ENCODE measurements at regions of chr3 and their contacts with region 1.

Region 1: GRCh38 chr3:67113802-67114407 is 115.8 kb downstream of the KBTBD8 start:
- DNase-seq: peak; percentile 63 to 76 (median 68)
- H3K4me3 ChIP-seq: no peak overlapping the region
- H3K4me3 Mint-ChIP-seq: no peak overlapping the region
- H3K27ac ChIP-seq: no peak overlapping the region
- H3K27ac Mint-ChIP-seq: no peak overlapping the region
- H3K4me1 ChIP-seq: no peaks in the 10 kb centered on the region
- H3K4me1 Mint-ChIP-seq: no peaks in the 10 kb centered on the region
- H3K27me3 ChIP-seq: no peaks in the 10 kb centered on the region
- H3K27me3 Mint-ChIP-seq: peaks cover 7 to 17% of the 10 kb centered on the region in 2 donors

Region 2: GRCh38 chr3:66998113-66998903 is 115.6 kb before region 1 on chr3 and contains the start of gene KBTBD8:
- CTCF ChIA-PET with region 1: interaction called, 14 read pairs
- POLR2A ChIA-PET with region 1: no interaction called
- intact Hi-C with region 1: no loop called
- DNase-seq: peak; percentile 98 to 99 (median 98)
- H3K4me3 ChIP-seq: peak within 1 kb of the TSS; percentile 57 to 85
- H3K4me3 Mint-ChIP-seq: peak within 1 kb of the TSS; percentile 90 to 96 (median 94)
- H3K27ac ChIP-seq: peak within 1 kb of the TSS; percentile 67
- H3K27ac Mint-ChIP-seq: peak within 1 kb of the TSS; percentile 88 to 97 (median 95)
- H3K4me1 ChIP-seq: peaks cover 39% of the 10 kb centered on the region
- H3K4me1 Mint-ChIP-seq: peaks cover 23 to 48% (median 30%) of the 10 kb centered on the region in 4 donors
- H3K27me3 ChIP-seq: peaks cover 3% of the 10 kb centered on the region
- H3K27me3 Mint-ChIP-seq: peaks cover 0 to 4% of the 10 kb centered on the region in 2 donors
- total RNA-seq, gene KBTBD8: 8.3 to 10.8 TPM

Region 3: DNA sequence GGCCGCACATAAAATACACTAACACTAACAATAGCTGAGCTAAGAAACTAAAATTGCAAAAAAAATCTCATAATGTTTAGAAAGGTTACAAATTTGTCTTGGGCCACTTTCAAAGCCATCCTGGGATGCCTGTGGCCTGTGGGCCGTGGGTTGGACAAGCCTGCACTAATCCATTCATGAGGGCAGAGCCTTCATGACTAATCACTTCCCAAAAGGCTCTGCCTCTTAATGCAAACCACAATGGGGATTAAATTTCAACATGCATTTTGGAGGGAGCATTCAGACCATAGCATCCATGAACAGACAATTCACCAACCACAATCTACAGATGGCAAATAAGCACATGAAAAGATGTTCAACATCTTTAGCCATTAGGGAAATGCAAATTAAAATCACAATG is 412.3 kb after region 1 on chr3:
- CTCF ChIA-PET with region 1: no interaction called
- POLR2A ChIA-PET with region 1: no interaction called
- intact Hi-C with region 1: no loop called
- DNase-seq: no peak
- H3K4me3 ChIP-seq: no peak overlapping the region
- H3K4me3 Mint-ChIP-seq: no peak overlapping the region
- H3K27ac ChIP-seq: no peak overlapping the region
- H3K27ac Mint-ChIP-seq: no peak overlapping the region
- H3K4me1 ChIP-seq: no peaks in the 10 kb centered on the region
- H3K4me1 Mint-ChIP-seq: peaks cover 1 to 22% (median 10%) of the 10 kb centered on the region in 4 donors
- H3K27me3 ChIP-seq: no peaks in the 10 kb centered on the region
- H3K27me3 Mint-ChIP-seq: no peaks in the 10 kb centered on the region

Region 4: DNA sequence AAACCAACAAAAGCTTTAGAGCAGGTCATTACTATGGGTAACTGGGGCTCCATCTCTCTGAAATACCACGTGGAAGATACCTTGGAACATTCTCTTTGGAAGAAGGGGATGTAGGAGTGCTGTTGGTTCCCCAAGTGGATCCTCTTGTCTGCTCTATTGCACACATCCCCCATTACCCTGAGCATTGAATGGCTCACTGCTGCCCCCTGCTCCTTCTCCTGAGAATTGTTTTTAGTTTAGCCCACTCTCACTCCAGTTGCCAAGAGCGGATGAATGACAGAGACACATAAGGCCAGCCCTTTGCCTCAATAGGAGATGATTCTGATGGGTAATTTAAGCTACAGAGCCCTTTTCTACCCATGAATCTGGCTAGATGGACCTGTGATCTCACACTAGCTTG is 676.1 kb after region 1 on chr3:
- CTCF ChIA-PET with region 1: interaction called, 51 read pairs
- POLR2A ChIA-PET with region 1: no interaction called
- intact Hi-C with region 1: loop called (anchors 1 kb)
- DNase-seq: peak; percentile 55 to 68 (median 58)
- H3K4me3 ChIP-seq: no peak overlapping the region
- H3K4me3 Mint-ChIP-seq: no peak overlapping the region
- H3K27ac ChIP-seq: no peak overlapping the region
- H3K27ac Mint-ChIP-seq: no peak overlapping the region
- H3K4me1 ChIP-seq: no peaks in the 10 kb centered on the region
- H3K4me1 Mint-ChIP-seq: peaks cover 4 to 10% (median 5%) of the 10 kb centered on the region in 4 donors
- H3K27me3 ChIP-seq: no peaks in the 10 kb centered on the region
- H3K27me3 Mint-ChIP-seq: no peaks in the 10 kb centered on the region

Region 5: GRCh38 chr3:68876112-68876713 is 1762.3 kb after region 1 on chr3:
- CTCF ChIA-PET with region 1: interaction called, 97 read pairs
- POLR2A ChIA-PET with region 1: no interaction called
- intact Hi-C with region 1: loop called (anchors 1 kb)
- DNase-seq: peak in 4 of 5 donors; percentile 49 to 58 (median 52)
- H3K4me3 ChIP-seq: no peak overlapping the region
- H3K4me3 Mint-ChIP-seq: no peak overlapping the region
- H3K27ac ChIP-seq: no peak overlapping the region
- H3K27ac Mint-ChIP-seq: no peak overlapping the region
- H3K4me1 ChIP-seq: no peaks in the 10 kb centered on the region
- H3K4me1 Mint-ChIP-seq: no peaks in the 10 kb centered on the region
- H3K27me3 ChIP-seq: no peaks in the 10 kb centered on the region
- H3K27me3 Mint-ChIP-seq: peaks cover 9% of the 10 kb centered on the region in 2 donors